ENCODE measurements at regions of chr7 and their contacts with region 1.

Region 1: DNA sequence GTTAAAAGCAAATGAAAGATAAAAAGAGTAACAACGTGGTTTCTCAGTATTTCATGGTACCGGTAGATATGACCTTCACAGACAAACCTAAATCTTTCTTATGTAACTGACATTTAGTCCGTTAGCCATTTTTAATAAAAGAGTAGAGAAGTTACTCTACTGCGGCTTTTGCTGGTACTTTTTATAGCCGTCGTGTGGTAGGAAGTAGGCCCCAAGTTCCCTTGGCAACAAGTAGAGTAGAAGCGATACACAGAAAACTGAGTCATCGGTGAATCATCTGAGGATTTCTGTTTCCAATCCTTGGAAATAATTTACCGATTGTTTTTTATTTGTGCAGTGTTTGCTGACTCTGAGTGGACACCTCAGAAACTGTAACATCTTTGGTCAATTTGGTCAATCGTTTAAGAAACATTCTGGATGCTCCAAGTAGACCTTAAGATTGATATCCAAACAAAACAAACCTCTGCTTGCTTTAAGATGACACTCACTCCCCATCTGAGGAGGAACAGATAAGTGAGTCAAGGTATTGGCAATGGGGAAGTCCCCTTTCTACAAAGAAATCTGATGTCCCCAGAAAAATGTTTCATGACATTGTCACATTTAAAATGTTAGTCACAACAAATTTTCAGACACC is 63.9 kb upstream of the AHR start:
- DNase-seq: peak in 13 of 14 experiments; percentile 22 to 94 (median 56)
- ATAC-seq: peak; percentile 86
- H3K4me3 ChIP-seq: peak overlapping the region; percentile 31
- H3K4me3 Mint-ChIP-seq: peak overlapping the region; percentile 81
- H3K27ac ChIP-seq: peak overlapping the region; percentile 78 to 96
- H3K27ac Mint-ChIP-seq: peak overlapping the region; percentile 96
- H3K4me1 ChIP-seq: peaks cover 27% of the 10 kb centered on the region
- H3K4me1 Mint-ChIP-seq: peaks cover 46% of the 10 kb centered on the region
- H3K27me3 ChIP-seq: no peaks in the 10 kb centered on the region
- H3K27me3 Mint-ChIP-seq: no peaks in the 10 kb centered on the region
- CTCF ChIP-seq: no peak

Region 2: DNA sequence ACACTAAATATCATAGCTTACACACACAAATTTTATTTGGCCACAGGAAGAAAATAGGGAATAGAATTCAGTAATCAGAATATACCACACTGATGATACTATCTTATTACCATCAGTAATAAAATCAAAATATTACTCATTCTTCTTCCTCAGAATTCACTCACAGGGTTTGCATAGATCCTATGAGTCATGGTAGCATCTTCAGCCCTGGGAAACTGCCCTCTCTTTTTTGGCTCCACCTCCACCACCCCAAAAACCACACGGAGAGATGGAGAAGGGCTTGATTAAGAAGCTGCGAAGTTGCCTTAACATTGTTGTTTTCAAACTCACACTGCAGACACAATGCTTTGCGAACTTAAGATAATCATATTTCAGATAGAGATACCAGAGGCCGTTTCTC is 90.2 kb before region 1 on chr7:
- CTCF ChIA-PET with region 1: interaction called, 3 read pairs
- POLR2A ChIA-PET with region 1: interaction called, 3 read pairs
- intact Hi-C with region 1: loop called (anchors 5 kb)
- DNase-seq: peak; percentile 3 to 78 (median 38)
- ATAC-seq: peak; percentile 78
- H3K4me3 ChIP-seq: peak overlapping the region; percentile 8
- H3K4me3 Mint-ChIP-seq: peak overlapping the region; percentile 60
- H3K27ac ChIP-seq: no peak overlapping the region
- H3K27ac Mint-ChIP-seq: peak overlapping the region; percentile 75
- H3K4me1 ChIP-seq: peaks cover 21% of the 10 kb centered on the region
- H3K4me1 Mint-ChIP-seq: peaks cover 49% of the 10 kb centered on the region
- H3K27me3 ChIP-seq: no peaks in the 10 kb centered on the region
- H3K27me3 Mint-ChIP-seq: no peaks in the 10 kb centered on the region
- CTCF ChIP-seq: no peak

Region 3: DNA sequence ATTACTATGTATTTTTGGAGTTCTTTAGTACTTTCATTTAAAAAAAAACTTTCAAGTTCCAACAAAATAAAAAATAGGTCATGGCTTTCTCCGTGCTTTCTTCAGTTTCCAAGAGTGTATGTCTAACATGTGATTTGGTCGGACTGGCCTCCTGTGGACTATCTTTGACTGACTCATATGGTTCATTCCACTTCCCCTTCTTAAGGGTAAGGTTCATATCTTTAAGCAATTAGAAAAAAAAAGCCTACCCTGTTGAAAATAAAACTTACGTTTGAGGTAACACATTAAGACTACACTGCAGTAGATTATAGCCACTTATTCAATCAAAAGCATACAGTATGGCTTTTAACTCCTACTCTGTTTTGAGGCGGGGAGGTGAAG is 48.8 kb before region 1 on chr7:
- CTCF ChIA-PET with region 1: no interaction called
- POLR2A ChIA-PET with region 1: no interaction called
- intact Hi-C with region 1: loop called in 1 of 2 experiments (anchors 10 kb)
- DNase-seq: peak in 4 of 14 experiments; percentile 17 to 58 (median 35)
- ATAC-seq: peak; percentile 34
- H3K4me3 ChIP-seq: no peak overlapping the region
- H3K4me3 Mint-ChIP-seq: no peak overlapping the region
- H3K27ac ChIP-seq: no peak overlapping the region
- H3K27ac Mint-ChIP-seq: no peak overlapping the region
- H3K4me1 ChIP-seq: no peaks in the 10 kb centered on the region
- H3K4me1 Mint-ChIP-seq: peaks cover 15% of the 10 kb centered on the region
- H3K27me3 ChIP-seq: no peaks in the 10 kb centered on the region
- H3K27me3 Mint-ChIP-seq: no peaks in the 10 kb centered on the region
- CTCF ChIP-seq: no peak

Region 4: GRCh38 chr7:17292843-17293242 is 58.3 kb after region 1 on chr7:
- CTCF ChIA-PET with region 1: no interaction called
- POLR2A ChIA-PET with region 1: interaction called, 3 read pairs
- intact Hi-C with region 1: loop called in 1 of 2 experiments (anchors 5 kb)
- DNase-seq: no peak
- ATAC-seq: no peak
- H3K4me3 ChIP-seq: no peak overlapping the region
- H3K4me3 Mint-ChIP-seq: no peak overlapping the region
- H3K27ac ChIP-seq: no peak overlapping the region
- H3K27ac Mint-ChIP-seq: no peak overlapping the region
- H3K4me1 ChIP-seq: peaks cover 4% of the 10 kb centered on the region
- H3K4me1 Mint-ChIP-seq: peaks cover 10% of the 10 kb centered on the region
- H3K27me3 ChIP-seq: no peaks in the 10 kb centered on the region
- H3K27me3 Mint-ChIP-seq: no peaks in the 10 kb centered on the region
- CTCF ChIP-seq: no peak

Region 5: DNA sequence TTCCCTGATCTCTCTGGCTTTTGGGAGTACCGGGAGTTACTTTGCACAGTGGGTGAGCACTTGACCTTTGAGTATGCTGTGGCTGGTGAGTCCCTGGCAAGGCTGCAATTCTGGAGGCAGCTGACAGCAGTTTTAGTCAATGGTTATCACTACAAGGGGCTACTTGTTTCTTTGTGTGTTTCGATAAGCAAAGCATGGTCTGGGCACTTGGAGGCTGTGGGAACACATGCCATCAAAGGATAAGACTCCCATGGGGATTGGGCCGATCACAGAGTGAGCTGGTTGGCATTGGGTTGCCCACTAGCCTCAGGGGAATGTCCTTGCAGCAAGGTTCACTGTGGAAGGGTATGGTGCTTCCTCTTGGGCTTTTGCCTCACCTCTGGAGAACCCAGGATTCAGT is 497.6 kb after region 1 on chr7:
- CTCF ChIA-PET with region 1: no interaction called
- POLR2A ChIA-PET with region 1: no interaction called
- intact Hi-C with region 1: no loop called
- DNase-seq: no peak
- ATAC-seq: no peak
- H3K4me3 ChIP-seq: no peak overlapping the region
- H3K4me3 Mint-ChIP-seq: no peak overlapping the region
- H3K27ac ChIP-seq: no peak overlapping the region
- H3K27ac Mint-ChIP-seq: no peak overlapping the region
- H3K4me1 ChIP-seq: no peaks in the 10 kb centered on the region
- H3K4me1 Mint-ChIP-seq: no peaks in the 10 kb centered on the region
- H3K27me3 ChIP-seq: no peaks in the 10 kb centered on the region
- H3K27me3 Mint-ChIP-seq: peaks cover 12% of the 10 kb centered on the region
- CTCF ChIP-seq: no peak